HCT116 (cell line): ENCODE measurements at regions of chr2 and their contacts with region 1.

Region 1: GRCh38 chr2:26922405-26923188 is 47.8 kb upstream of the MAPRE3 start:
- DNase-seq: peak; percentile 47
- ATAC-seq: peak; percentile 99
- H3K4me3 ChIP-seq: no peak overlapping the region
- H3K27ac ChIP-seq: no peak overlapping the region
- H3K4me1 ChIP-seq: peaks cover 4 to 9% of the 10 kb centered on the region in 2 experiments; a peak in 1 of 4 replicates
- H3K27me3 ChIP-seq: no peaks in the 10 kb centered on the region
- CTCF ChIP-seq: peak; percentile 69 to 83 (median 74)
- POLR2A ChIP-seq: no peak
- RAD21 ChIP-seq: peak; percentile 68

Region 2: GRCh38 chr2:26382564-26382963 is 540.0 kb before region 1 on chr2:
- CTCF ChIA-PET with region 1: no interaction called
- POLR2A ChIA-PET with region 1: no interaction called
- RAD21 ChIA-PET with region 1: no interaction called
- intact Hi-C with region 1: no loop called
- DNase-seq: no peak
- ATAC-seq: no peak
- H3K4me3 ChIP-seq: no peak overlapping the region
- H3K27ac ChIP-seq: no peak overlapping the region
- H3K4me1 ChIP-seq: no peaks in the 10 kb centered on the region
- H3K27me3 ChIP-seq: no peaks in the 10 kb centered on the region
- CTCF ChIP-seq: no peak
- POLR2A ChIP-seq: no peak
- RAD21 ChIP-seq: no peak

Region 3: DNA sequence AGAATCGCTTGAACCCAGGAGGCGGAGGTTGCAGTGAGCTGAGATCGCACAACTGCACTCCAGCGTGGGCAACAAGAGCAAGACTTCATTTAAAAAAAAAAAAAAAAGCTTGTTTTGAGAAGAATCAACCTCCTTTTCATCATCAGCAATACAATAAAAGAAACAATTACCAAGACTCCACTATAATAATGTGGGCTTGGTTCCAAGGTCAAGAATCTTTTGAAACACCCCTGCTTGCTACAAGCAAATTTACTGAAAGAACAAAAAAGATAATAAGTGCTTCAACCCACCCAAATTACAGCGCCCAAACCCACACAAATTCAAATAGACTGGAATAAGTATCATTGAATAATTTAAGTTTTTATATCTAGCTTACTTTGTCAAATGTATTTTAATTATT is 14.3 kb after region 1 on chr2:
- CTCF ChIA-PET with region 1: interaction called, 14 read pairs
- POLR2A ChIA-PET with region 1: no interaction called
- RAD21 ChIA-PET with region 1: no interaction called
- intact Hi-C with region 1: no loop called
- DNase-seq: no peak
- ATAC-seq: no peak
- H3K4me3 ChIP-seq: no peak overlapping the region
- H3K27ac ChIP-seq: no peak overlapping the region
- H3K4me1 ChIP-seq: no peaks in the 10 kb centered on the region
- H3K27me3 ChIP-seq: no peaks in the 10 kb centered on the region
- CTCF ChIP-seq: no peak
- POLR2A ChIP-seq: no peak
- RAD21 ChIP-seq: no peak